HepG2 (cell line): ENCODE measurements at regions of chr11 and their contacts with region 1.

Region 1: GRCh38 chr11:129100193-129100592 is 91.9 kb downstream of the ARHGAP32 start:
- DNase-seq: no peak
- ATAC-seq: no peak
- H3K4me3 ChIP-seq: no peak overlapping the region
- H3K27ac ChIP-seq: no peak overlapping the region
- H3K4me1 ChIP-seq: no peaks in the 10 kb centered on the region
- H3K27me3 ChIP-seq: no peaks in the 10 kb centered on the region
- CTCF ChIP-seq: no peak
- EP300 ChIP-seq: no peak
- POLR2A ChIP-seq: no peak
- RAD21 ChIP-seq: no peak

Region 2: DNA sequence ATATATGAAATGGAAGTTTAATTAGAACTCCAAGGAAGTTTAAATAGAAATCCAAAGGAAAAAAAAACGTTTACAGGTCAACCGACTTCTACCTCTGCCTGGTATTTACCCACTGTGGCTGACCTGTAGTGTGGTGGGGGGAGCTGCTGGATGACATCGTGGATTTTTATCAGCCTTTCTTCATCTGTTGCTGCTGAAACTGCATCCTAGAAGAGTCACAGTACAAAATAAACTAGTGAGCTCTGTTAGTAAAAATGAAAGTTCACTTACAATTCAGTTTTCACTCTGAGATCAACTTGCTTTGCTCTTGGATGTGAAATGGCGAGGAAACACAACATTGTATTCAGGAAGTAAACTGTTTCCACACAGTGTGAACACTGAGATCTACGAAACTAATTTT is 114.3 kb before region 1 on chr11:
- CTCF ChIA-PET with region 1: no interaction called
- POLR2A ChIA-PET with region 1: no interaction called
- in situ Hi-C with region 1: no loop called
- intact Hi-C with region 1: no loop called
- DNase-seq: no peak
- ATAC-seq: no peak
- H3K4me3 ChIP-seq: no peak overlapping the region
- H3K27ac ChIP-seq: no peak overlapping the region
- H3K4me1 ChIP-seq: no peaks in the 10 kb centered on the region
- H3K27me3 ChIP-seq: no peaks in the 10 kb centered on the region; a peak in 1 of 5 replicates
- CTCF ChIP-seq: no peak
- EP300 ChIP-seq: no peak
- POLR2A ChIP-seq: no peak
- RAD21 ChIP-seq: no peak

Region 3: DNA sequence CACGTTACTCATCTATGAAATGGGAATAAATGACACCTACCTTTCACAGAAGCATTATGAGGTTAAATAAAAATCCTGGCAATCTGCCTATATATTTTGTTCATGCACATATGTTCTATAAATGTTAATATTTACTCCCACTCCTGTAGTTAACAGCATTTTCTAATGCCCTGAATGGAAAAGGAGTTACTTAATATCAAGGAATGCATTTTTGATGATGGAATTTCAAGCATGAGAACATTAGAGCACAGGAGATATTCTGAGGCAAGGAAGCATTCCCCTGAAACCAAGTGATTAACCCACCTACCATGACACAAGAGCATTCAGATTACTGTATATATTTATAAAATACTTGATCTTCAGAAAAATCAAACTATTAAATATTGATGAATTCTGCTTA is 10.1 kb before region 1 on chr11:
- CTCF ChIA-PET with region 1: no interaction called
- POLR2A ChIA-PET with region 1: no interaction called
- in situ Hi-C with region 1: no loop called
- intact Hi-C with region 1: loop called (anchors 1 kb)
- DNase-seq: no peak
- ATAC-seq: no peak
- H3K4me3 ChIP-seq: no peak overlapping the region
- H3K27ac ChIP-seq: no peak overlapping the region
- H3K4me1 ChIP-seq: no peaks in the 10 kb centered on the region
- H3K27me3 ChIP-seq: no peaks in the 10 kb centered on the region
- CTCF ChIP-seq: no peak
- EP300 ChIP-seq: no peak
- POLR2A ChIP-seq: no peak
- RAD21 ChIP-seq: no peak